Heart left ventricle (tissue), 16 donors: ENCODE measurements at regions of chr17 and their contacts with region 1.

Region 1: GRCh38 chr17:78933959-78934568 is 8.9 kb upstream of the TIMP2 start:
- DNase-seq: peak; percentile 93 to 96 (median 94)
- ATAC-seq: peak; percentile 80 to 91 (median 86)
- H3K4me3 ChIP-seq: peak overlapping the region in 9 of 12 donors; percentile 25 to 49 (median 39)
- H3K27ac ChIP-seq: peak overlapping the region; percentile 59 to 94 (median 80)
- H3K4me1 ChIP-seq: peaks cover 4 to 36% (median 26%) of the 10 kb centered on the region in 12 donors
- H3K27me3 ChIP-seq: no peaks in the 10 kb centered on the region
- CTCF ChIP-seq: no peak
- POLR2A ChIP-seq: no peak

Region 2: GRCh38 chr17:78883164-78884122 is 50.6 kb before region 1 on chr17:
- intact Hi-C with region 1: loop called in 3 of 10 experiments (anchors 5 kb)
- DNase-seq: peak; percentile 81 to 90 (median 88)
- ATAC-seq: peak; percentile 53 to 77 (median 76)
- H3K4me3 ChIP-seq: peak overlapping the region in 10 of 12 donors; percentile 6 to 50 (median 29)
- H3K27ac ChIP-seq: peak overlapping the region; percentile 86 to 98 (median 96)
- H3K4me1 ChIP-seq: peaks cover 9 to 78% (median 71%) of the 10 kb centered on the region in 12 donors
- H3K27me3 ChIP-seq: no peaks in the 10 kb centered on the region
- CTCF ChIP-seq: peak in 1 of 12 donors; percentile 7
- POLR2A ChIP-seq: peak in 1 of 2 donors; percentile 41

Region 3: DNA sequence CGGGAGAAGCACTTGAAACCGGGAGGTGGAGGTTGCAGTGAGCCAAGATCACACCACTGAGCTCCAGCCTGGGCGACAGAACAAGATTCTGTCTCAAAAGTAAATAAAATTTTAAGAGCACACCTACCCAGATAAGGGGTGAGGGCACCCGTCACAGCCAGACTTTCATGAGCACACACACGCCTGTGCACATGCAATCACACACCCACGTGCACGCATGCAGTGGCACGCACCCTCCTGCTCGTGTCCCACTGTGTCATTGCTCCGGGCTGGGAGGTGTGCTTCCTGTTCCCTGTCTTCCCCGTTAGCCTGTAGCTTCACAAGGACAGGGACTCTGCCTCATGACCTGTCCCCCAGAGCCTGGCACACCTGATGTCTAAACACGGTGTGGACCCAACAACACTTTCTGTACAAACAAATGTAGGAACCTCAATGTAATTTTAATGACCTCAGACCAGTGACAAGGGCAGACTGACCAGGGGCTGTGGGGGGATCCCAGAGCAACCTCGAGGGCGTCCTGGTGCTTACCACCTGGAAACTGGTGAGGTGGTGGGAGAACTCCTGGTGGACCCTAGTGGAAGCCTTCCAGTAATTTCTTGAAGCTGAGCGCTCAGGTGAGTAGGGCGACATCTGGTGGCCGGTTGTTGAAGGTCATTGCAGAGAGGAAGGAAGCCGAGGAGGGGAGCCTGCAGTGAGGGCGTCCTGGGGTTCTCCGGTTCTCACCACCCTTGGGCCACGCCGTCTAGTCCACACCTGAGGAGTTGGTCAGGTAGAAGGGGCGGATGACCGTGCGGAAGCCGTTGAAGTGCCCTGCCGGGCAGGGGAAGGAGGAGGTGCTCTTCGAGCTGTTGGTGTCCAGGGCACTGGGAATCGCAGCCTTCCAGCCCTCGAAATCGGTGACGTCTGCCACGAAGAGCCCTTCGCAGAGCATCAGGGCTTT is 37.0 kb after region 1 on chr17:
- intact Hi-C with region 1: loop called in 3 of 10 experiments (anchors 5 to 10 kb)
- DNase-seq: peak; percentile 79 to 88 (median 84)
- ATAC-seq: peak in 3 of 4 donors; percentile 39 to 49 (median 43)
- H3K4me3 ChIP-seq: no peak overlapping the region
- H3K27ac ChIP-seq: peak overlapping the region in 9 of 12 donors; percentile 11 to 72 (median 51)
- H3K4me1 ChIP-seq: peaks cover 0 to 54% (median 26%) of the 10 kb centered on the region in 12 donors
- H3K27me3 ChIP-seq: no peaks in the 10 kb centered on the region
- CTCF ChIP-seq: peak; percentile 82 to 94 (median 88)
- POLR2A ChIP-seq: no peak